ENCODE measurements at regions of chr2 and their contacts with region 1.

Region 1: DNA sequence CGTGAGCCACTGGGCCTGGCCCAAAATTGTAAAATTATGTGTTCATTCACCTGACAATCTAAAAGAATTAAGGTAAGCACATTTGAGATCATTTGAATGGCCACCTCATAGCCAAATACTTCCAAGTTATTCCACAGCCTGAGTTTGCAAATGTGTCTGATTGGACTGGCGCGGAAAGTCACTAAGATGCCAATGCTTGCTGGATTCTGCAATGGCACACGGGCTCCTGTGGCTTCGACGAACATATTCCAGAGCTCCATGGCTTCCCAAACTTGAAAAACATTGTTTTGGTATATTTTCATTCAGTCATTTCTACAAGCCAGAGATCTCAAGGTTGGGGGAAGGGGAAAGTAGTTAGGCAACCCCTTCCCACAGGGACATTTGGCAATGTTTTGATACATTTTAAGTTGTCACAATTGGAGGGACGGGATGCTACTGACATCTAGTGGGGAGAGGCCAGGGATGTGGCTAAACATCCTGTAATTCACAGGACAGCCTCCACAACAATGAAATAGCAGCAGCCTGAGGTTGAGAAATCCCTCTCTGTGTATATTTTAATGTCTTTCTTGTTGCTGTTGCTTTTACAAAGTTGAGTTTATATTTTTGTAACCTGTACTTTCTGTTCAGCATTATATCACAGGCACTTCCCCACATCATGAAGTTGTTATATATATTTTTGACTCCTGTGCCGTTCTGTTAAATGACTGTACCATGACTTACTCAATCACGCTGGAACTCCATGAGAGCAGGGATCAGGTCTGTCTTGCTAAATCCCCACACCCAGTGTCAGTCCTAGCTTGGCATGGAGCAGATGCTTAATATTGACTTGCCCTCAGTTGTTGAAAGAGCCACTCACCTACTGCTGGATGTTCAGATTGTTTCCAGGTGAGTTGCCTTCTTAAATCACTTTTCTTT is 56.9 kb downstream of the COL4A4 start:
- DNase-seq: peak; percentile 73
- ATAC-seq: peak; percentile 100
- H3K4me3 ChIP-seq: no peak overlapping the region
- H3K27ac ChIP-seq: no peak overlapping the region
- H3K4me1 ChIP-seq: no peaks in the 10 kb centered on the region
- H3K27me3 ChIP-seq: peaks cover 0 to 7% of the 10 kb centered on the region in 2 experiments; a peak in 1 of 5 replicates
- CTCF ChIP-seq: peak; percentile 94
- EP300 ChIP-seq: no peak
- POLR2A ChIP-seq: no peak
- RAD21 ChIP-seq: peak; percentile 89

Region 2: DNA sequence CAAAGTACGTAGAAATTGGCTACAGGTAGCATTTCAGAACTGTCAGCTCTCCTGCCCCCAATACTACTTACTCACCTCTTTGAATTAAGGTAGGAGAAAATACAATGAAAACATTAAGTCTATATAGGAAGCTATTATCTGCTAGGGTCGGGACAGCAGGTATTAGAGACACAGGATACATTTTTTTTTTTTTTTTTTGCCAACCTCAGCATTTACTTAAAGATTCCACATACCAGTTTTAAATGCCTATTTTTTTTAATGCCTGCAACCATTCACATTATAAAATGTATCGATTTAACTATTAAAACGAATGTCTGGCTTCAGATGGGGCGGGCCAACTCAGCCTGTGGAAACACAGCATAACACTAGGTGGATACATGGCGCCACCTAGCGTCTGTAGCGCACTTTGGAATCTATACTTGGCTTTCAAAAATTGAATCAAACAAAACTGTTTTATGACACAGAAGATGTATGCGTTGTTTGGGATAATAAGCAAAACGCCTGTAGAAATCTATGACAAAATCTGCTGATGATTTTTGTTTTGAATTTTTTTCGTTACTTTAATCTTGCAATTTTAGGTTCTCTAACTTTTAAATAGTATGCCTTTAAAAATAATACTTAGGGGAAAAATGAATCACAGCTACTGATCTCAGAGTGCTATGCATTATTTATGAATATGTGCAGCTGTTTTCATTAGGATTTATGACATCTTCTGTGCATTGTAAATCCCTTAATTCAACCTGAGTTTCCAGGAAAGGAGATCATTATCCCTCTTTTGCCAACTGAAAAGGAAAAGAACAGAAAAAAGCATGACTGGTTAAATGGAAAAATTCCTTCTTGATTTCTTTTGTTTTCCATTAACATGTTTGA is 1446.6 kb before region 1 on chr2:
- CTCF ChIA-PET with region 1: interaction called, 18 read pairs
- POLR2A ChIA-PET with region 1: no interaction called
- in situ Hi-C with region 1: loop called (anchors 5 kb)
- intact Hi-C with region 1: no loop called
- DNase-seq: peak; percentile 53
- ATAC-seq: peak; percentile 90
- H3K4me3 ChIP-seq: no peak overlapping the region
- H3K27ac ChIP-seq: no peak overlapping the region
- H3K4me1 ChIP-seq: no peaks in the 10 kb centered on the region
- H3K27me3 ChIP-seq: no peaks in the 10 kb centered on the region
- CTCF ChIP-seq: peak; percentile 89
- EP300 ChIP-seq: no peak
- POLR2A ChIP-seq: no peak
- RAD21 ChIP-seq: peak; percentile 82

Region 3: DNA sequence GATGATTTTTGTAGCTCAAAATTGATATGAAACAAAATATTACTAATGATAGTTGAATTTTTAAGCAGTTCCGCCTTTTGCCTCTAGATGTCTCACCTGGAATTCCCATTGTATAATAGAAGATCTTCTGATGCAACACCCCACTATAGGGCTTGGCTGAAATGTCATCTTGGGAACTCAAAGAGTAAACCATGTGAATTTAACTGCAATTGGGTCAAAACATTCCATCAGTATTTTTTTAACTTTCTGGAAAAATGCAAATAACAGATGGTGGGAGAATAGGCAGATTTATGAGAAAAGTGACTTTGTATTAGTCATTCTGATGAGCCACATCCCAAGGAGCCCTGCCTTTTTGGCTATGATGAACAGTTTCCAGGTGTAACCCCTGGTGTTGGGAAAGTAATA is 1217.7 kb before region 1 on chr2:
- CTCF ChIA-PET with region 1: no interaction called
- POLR2A ChIA-PET with region 1: no interaction called
- in situ Hi-C with region 1: no loop called
- intact Hi-C with region 1: loop called (anchors 2 kb)
- DNase-seq: peak; percentile 57
- ATAC-seq: peak; percentile 71
- H3K4me3 ChIP-seq: no peak overlapping the region
- H3K27ac ChIP-seq: no peak overlapping the region
- H3K4me1 ChIP-seq: peaks cover 4% of the 10 kb centered on the region
- H3K27me3 ChIP-seq: no peaks in the 10 kb centered on the region
- CTCF ChIP-seq: peak; percentile 81
- EP300 ChIP-seq: peak in 1 of 2 experiments; percentile 49; a peak in 1 of 4 replicates
- POLR2A ChIP-seq: no peak
- RAD21 ChIP-seq: peak; percentile 51; the same call in 1 of the 2 replicates

Region 4: DNA sequence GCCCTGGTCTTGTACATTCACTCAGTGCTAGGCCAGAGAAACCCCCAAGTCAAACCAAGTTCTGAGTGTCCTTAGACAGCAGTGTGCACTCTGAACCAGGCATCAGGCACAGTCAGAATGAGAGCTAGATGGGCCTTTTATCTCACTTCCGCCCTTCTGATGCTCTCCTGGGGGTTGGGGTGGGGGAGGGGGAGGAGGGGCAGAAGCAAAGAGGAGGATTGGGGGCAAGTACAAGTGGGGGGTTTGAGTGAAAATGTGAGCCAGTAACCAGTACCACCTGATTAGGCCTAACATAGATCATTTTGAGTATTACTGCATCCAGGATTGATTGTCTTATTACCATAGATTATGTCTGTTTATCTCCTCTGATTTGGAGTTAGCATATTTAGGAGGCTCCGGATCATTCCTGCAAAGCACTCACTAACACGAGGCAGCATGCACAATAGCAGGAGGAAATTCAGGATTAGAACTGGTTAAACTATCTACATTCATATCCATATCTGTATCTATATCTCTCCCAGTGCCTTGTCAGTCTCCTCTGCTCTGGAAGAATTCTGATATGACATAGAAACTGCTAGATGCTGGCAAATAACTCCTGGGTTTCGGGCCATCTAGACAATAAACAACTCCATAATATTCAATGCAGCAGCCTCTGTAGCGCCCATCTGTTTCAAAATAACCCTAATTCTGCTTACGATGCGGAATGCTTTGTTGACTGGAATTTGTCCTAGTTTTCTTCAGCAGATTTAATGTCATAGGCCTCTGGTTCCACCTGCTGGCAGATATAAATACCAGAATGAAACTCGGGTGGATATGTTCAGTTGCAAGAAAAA is 122.1 kb before region 1 on chr2:
- CTCF ChIA-PET with region 1: no interaction called
- POLR2A ChIA-PET with region 1: no interaction called
- in situ Hi-C with region 1: no loop called
- intact Hi-C with region 1: loop called (anchors 1 kb)
- DNase-seq: peak; percentile 72
- ATAC-seq: peak; percentile 87
- H3K4me3 ChIP-seq: no peak overlapping the region
- H3K27ac ChIP-seq: no peak overlapping the region
- H3K4me1 ChIP-seq: peaks cover 17% of the 10 kb centered on the region
- H3K27me3 ChIP-seq: no peaks in the 10 kb centered on the region
- CTCF ChIP-seq: peak; percentile 82
- EP300 ChIP-seq: no peak
- POLR2A ChIP-seq: no peak
- RAD21 ChIP-seq: peak; percentile 88

Region 5: GRCh38 chr2:227025510-227025909 is 81.6 kb before region 1 on chr2:
- CTCF ChIA-PET with region 1: no interaction called
- POLR2A ChIA-PET with region 1: no interaction called
- in situ Hi-C with region 1: loop called (anchors 5 kb)
- intact Hi-C with region 1: no loop called
- DNase-seq: no peak
- ATAC-seq: no peak
- H3K4me3 ChIP-seq: no peak overlapping the region
- H3K27ac ChIP-seq: no peak overlapping the region
- H3K4me1 ChIP-seq: no peaks in the 10 kb centered on the region
- H3K27me3 ChIP-seq: peaks cover 0 to 3% of the 10 kb centered on the region in 2 experiments; a peak in 1 of 5 replicates
- CTCF ChIP-seq: no peak
- EP300 ChIP-seq: no peak
- POLR2A ChIP-seq: no peak
- RAD21 ChIP-seq: no peak

Region 6: DNA sequence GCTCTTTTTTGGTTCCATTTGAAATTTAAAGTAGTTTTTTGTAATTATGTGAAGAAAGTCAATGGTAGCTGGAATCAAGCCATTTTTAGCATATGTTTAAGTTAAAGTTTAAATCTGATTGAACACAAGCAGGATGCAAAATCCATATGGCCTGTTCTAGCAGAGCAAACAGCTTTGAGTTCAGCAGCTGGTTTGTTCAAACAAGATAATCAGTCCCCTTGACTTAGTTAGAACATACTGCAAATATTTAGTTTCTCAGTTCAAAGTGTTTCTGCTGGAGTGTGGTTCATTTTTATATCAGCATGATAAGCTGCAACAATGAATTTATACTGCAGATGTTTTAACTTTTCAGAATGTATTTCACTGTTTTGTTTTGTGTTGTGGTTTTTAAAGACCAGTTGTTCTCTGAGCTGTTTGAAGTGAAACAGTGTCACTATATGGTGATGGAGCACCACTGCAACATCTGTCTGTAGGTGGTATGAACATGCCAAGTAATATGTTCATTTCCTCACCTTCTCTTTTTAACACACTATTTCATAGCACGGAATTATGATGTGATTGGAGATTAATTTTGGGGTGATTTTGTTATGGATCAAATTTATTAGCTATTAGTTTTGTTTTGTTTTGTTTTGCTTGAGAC is 68.4 kb before region 1 on chr2:
- CTCF ChIA-PET with region 1: interaction called, 32 read pairs
- POLR2A ChIA-PET with region 1: no interaction called
- in situ Hi-C with region 1: no loop called
- intact Hi-C with region 1: loop called (anchors 1 kb)
- DNase-seq: peak; percentile 73
- ATAC-seq: peak; percentile 98
- H3K4me3 ChIP-seq: no peak overlapping the region
- H3K27ac ChIP-seq: no peak overlapping the region
- H3K4me1 ChIP-seq: peaks cover 16% of the 10 kb centered on the region
- H3K27me3 ChIP-seq: no peaks in the 10 kb centered on the region; a peak in 2 of 5 replicates
- CTCF ChIP-seq: peak; percentile 22; the same call in 1 of the 2 replicates
- EP300 ChIP-seq: peak in 1 of 2 experiments; percentile 84; a peak in 2 of 4 replicates
- POLR2A ChIP-seq: no peak
- RAD21 ChIP-seq: no peak